ENCODE measurements at regions of chr3 and their contacts with region 1.

Region 1: DNA sequence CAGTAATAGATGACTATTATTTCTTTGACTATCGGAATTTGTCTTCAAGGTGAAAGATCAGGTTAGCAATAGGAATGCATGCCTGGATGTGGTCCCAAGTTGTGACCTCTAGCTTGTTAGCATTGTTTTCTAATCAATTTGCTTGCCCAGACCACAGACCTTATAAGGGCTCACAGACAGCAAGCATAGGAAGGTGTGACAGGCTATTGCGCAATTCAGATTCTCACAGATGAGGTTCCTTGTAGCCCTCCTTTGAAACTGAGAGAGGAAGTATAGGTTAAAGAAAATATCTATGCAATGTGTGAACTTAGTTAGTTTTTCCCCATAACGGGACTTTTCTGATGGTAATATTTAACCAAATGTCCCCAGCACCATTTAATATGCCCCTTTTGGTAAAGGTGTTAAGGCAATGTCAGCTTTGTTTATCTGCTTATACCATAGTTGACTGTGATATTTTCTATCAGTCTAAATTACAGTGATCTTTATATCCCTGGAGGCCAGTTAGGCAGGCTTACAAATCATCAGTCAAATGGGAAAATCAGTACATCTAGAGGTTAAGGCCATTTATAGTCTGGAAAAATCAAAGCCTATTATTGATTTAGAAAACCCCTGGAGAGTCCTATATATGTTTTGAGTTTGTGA is 168.1 kb upstream of the MBNL1 start:
- DNase-seq: no peak
- H3K4me3 ChIP-seq: no peak overlapping the region
- H3K27ac ChIP-seq: no peak overlapping the region
- H3K4me1 ChIP-seq: no peaks in the 10 kb centered on the region
- H3K27me3 ChIP-seq: no peaks in the 10 kb centered on the region
- CTCF ChIP-seq: no peak
- POLR2A ChIP-seq: no peak

Region 2: GRCh38 chr3:152083135-152083534 is 17.5 kb before region 1 on chr3:
- intact Hi-C with region 1: loop called (anchors 1 kb)
- DNase-seq: no peak
- H3K4me3 ChIP-seq: no peak overlapping the region
- H3K27ac ChIP-seq: no peak overlapping the region
- H3K4me1 ChIP-seq: no peaks in the 10 kb centered on the region
- H3K27me3 ChIP-seq: no peaks in the 10 kb centered on the region
- CTCF ChIP-seq: no peak
- POLR2A ChIP-seq: no peak

Region 3: GRCh38 chr3:152794736-152795135 is 694.1 kb after region 1 on chr3:
- intact Hi-C with region 1: loop called (anchors 10 kb)
- DNase-seq: no peak
- H3K4me3 ChIP-seq: no peak overlapping the region
- H3K27ac ChIP-seq: no peak overlapping the region
- H3K4me1 ChIP-seq: no peaks in the 10 kb centered on the region
- H3K27me3 ChIP-seq: no peaks in the 10 kb centered on the region
- CTCF ChIP-seq: no peak
- POLR2A ChIP-seq: no peak

Region 4: GRCh38 chr3:154034797-154035330 is 1934.3 kb after region 1 on chr3:
- intact Hi-C with region 1: loop called (anchors 10 kb)
- DNase-seq: no peak
- H3K4me3 ChIP-seq: no peak overlapping the region
- H3K27ac ChIP-seq: no peak overlapping the region
- H3K4me1 ChIP-seq: no peaks in the 10 kb centered on the region
- H3K27me3 ChIP-seq: no peaks in the 10 kb centered on the region
- CTCF ChIP-seq: no peak
- POLR2A ChIP-seq: no peak

Measured in breast epithelium (tissue), 4 donors.